ENCODE measurements at regions of chr3 and their contacts with region 1.

Region 1: DNA sequence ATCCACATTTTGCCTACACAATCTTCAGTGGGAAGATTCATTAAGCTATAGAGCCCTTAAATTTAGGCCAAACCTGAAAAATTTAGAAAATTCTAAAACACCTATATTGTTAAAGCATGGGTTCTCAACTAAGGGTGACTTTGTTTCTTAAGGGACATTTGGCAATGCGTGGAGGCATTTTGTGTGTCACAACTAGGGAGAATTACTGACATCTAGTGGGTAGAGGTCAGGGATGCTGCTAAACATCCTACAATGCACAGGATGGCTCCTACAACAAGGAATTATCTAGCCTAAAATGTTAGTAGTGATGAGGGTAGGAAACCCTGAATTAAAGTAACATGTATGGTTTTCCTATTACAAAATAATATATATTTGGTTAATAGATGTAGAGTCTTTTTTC is 55.8 kb downstream of the TBC1D5 start:
- DNase-seq: peak; percentile 35
- H3K4me3 Mint-ChIP-seq: no peak overlapping the region
- H3K27ac Mint-ChIP-seq: no peak overlapping the region
- H3K4me1 Mint-ChIP-seq: peaks cover 5% of the 10 kb centered on the region
- H3K27me3 Mint-ChIP-seq: no peaks in the 10 kb centered on the region
- CTCF ChIP-seq: peak; percentile 45

Region 2: DNA sequence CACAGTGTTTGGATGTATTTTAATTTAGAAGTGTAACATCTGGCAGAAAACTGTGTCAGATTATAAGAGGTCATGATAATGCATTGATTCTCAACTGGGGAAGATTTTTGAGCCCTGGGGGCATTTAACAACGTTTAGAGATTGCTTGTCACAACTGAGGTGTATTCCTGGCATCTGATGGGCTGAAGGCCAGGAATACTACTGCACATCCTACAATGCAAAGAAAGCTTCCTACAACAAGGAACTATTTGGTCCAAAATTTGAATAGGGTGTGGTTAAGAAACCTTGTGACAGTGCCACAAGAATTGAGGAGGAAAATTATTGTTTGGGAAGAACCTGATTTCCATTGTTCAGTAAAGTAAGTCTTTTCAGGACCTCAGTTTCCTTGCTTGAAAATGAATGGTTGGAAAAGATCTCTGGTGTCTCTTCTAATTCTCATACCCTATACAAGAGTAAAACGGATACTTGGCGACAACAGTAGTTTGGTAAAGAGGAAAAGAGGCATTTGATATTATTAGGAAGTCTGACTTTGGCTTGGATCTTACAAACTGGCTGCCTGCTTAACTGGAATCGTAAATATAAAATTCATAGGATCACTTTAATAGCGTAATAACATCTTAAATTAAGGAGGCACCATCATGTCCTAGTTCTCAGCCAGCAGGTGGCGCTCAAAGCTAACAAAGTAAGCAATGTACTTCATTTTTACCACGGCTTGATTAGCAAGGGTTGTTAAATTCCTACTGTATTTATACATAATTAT is 1085.7 kb before region 1 on chr3:
- CTCF ChIA-PET with region 1: no interaction called
- POLR2A ChIA-PET with region 1: no interaction called
- intact Hi-C with region 1: loop called (anchors 10 kb)
- DNase-seq: peak; percentile 80
- H3K4me3 Mint-ChIP-seq: no peak overlapping the region
- H3K27ac Mint-ChIP-seq: no peak overlapping the region
- H3K4me1 Mint-ChIP-seq: no peaks in the 10 kb centered on the region
- H3K27me3 Mint-ChIP-seq: peaks cover 54% of the 10 kb centered on the region
- CTCF ChIP-seq: peak; percentile 69

Region 3: DNA sequence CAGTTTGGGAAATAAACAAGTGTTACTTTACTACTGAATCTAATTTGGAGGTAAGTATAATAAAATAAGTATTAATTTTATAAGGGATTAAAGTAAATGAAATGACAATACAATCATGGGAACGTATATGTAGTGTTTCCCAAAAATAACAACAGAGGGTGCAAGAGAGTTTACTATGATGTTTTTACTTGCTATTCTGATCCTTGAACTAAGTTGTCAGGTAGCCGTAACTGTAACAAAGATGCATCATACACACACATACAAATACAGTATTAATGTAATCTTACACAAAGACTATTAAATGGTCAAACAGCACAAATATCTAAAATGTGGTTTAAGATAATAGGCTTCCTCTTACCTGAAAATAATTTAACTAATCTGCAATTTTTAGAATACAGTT is 255.6 kb before region 1 on chr3:
- CTCF ChIA-PET with region 1: interaction called, 3 read pairs
- POLR2A ChIA-PET with region 1: no interaction called
- intact Hi-C with region 1: loop called (anchors 1 kb)
- DNase-seq: peak; percentile 54
- H3K4me3 Mint-ChIP-seq: no peak overlapping the region
- H3K27ac Mint-ChIP-seq: no peak overlapping the region
- H3K4me1 Mint-ChIP-seq: peaks cover 4% of the 10 kb centered on the region
- H3K27me3 Mint-ChIP-seq: no peaks in the 10 kb centered on the region
- CTCF ChIP-seq: peak; percentile 42

Region 4: DNA sequence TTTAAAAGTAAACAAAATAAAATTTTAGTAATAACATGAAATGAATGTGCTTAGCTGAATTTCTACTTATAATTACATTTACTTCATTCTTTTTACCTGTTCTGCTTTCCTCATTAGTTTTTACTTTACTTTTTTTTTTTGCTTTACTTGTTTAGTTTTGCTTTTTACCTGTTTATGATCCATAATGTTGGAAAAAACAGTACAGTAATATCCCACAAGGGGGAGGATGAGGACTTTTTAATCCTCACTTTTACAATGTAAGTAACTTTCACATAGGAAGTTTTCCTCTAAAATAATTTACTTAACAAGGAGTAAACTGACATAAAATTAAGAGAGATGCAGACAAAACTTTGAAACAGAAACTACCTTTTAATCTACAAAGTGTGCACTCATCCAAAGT is 212.9 kb before region 1 on chr3:
- CTCF ChIA-PET with region 1: no interaction called
- POLR2A ChIA-PET with region 1: no interaction called
- intact Hi-C with region 1: loop called (anchors 2 kb)
- DNase-seq: peak; percentile 31
- H3K4me3 Mint-ChIP-seq: no peak overlapping the region
- H3K27ac Mint-ChIP-seq: no peak overlapping the region
- H3K4me1 Mint-ChIP-seq: peaks cover 9% of the 10 kb centered on the region
- H3K27me3 Mint-ChIP-seq: no peaks in the 10 kb centered on the region
- CTCF ChIP-seq: peak; percentile 31

Region 5: DNA sequence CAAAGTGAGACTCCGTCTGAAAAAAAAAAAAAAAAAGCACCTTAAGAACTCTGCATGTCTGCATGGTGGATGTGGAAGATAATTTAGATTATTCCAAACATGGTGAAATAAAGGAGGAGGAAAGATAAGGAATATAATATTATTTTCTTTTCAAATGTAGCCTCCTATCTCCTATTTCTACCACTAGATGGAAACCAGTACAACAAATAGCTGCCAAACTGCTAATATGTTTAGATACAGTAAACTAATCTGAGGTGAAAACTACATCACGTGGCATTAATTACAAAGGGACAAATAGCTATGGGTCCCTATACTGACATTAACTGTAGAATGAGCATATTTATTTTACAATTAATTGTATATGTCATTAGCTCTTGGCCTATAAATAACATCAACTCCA is 142.0 kb before region 1 on chr3:
- CTCF ChIA-PET with region 1: interaction called, 3 read pairs
- POLR2A ChIA-PET with region 1: no interaction called
- intact Hi-C with region 1: loop called (anchors 5 kb)
- DNase-seq: no peak
- H3K4me3 Mint-ChIP-seq: no peak overlapping the region
- H3K27ac Mint-ChIP-seq: no peak overlapping the region
- H3K4me1 Mint-ChIP-seq: no peaks in the 10 kb centered on the region
- H3K27me3 Mint-ChIP-seq: no peaks in the 10 kb centered on the region
- CTCF ChIP-seq: no peak

Region 6: GRCh38 chr3:17915341-17915740 is 228.7 kb after region 1 on chr3:
- CTCF ChIA-PET with region 1: no interaction called
- POLR2A ChIA-PET with region 1: no interaction called
- intact Hi-C with region 1: no loop called
- DNase-seq: peak; percentile 63
- H3K4me3 Mint-ChIP-seq: no peak overlapping the region
- H3K27ac Mint-ChIP-seq: no peak overlapping the region
- H3K4me1 Mint-ChIP-seq: peaks cover 5% of the 10 kb centered on the region
- H3K27me3 Mint-ChIP-seq: no peaks in the 10 kb centered on the region
- CTCF ChIP-seq: no peak

Measured in MCF 10A (cell line).